ENCODE measurements at regions of chr17 and their contacts with region 1.

Region 1: DNA sequence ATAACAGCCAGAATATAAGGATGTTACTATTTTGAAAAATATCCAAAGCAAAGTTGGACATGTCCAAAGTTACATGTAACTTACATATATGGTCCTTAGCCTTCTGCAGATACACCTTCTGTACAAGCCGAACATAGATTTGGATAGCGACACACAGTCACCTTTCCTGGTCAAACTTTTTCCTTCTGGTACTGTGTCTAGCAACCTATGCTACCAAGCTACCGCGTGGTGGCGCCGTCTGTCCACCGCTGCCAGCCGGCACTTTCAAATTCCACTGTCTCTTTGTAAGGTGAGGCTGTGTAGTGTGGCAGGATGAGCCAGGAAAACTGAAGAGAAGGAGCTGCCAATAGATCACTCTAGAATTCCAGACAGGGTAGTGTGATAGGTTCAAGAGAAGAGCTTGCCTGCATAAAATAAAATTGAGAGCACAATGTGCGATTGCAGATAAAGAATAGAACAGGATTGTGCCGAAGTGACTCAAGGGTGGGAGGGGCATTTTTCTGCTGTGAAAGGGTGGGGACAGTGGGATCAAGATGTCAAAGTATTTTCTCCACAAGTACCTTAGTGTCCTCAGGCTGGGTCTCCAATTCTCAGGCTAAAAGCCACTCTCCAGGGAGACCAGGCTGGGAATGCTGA is 366.9 kb downstream of the SLC39A11 start:
- DNase-seq: peak; percentile 57
- H3K4me3 Mint-ChIP-seq: no peak overlapping the region
- H3K27ac Mint-ChIP-seq: peak overlapping the region; percentile 94
- H3K4me1 Mint-ChIP-seq: peaks cover 58% of the 10 kb centered on the region
- H3K27me3 Mint-ChIP-seq: no peaks in the 10 kb centered on the region

Region 2: DNA sequence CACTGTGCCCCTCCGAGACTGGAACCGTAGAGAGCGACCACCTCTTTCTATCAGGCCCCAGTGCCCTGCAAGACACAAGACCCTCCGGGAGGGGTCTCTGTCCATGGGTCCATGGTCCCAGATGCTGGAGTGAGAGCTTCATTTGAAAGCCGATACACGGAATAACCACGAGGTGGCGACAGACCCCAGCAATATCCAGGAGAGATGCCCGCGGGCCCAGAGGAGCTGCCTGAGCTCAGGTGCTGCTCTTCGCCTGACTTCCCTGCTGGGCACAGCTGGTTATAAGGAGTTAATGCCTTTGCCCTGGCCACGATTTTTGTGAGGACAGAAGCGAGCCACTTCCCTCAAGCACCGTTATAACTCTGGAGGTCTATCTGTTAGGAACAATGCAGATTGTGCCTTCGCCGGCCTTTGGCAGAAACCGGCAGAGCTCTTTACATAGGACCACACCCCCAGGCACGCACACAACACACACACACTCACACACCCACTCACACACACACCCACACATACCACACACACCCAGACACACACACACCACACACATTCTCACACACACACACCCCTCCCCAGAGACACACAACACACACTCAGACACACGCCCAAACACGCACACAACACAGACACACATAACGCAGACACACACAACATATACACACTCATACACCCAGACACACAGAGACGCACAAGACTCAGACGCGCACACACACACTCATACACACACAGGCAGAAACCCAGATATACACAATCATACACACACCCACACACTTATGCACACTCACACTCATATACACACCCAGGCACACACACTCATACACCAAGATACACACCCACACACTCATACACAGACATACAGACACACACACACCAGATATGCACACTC is 168.4 kb before region 1 on chr17:
- CTCF ChIA-PET with region 1: interaction called, 19 read pairs
- POLR2A ChIA-PET with region 1: interaction called, 3 read pairs
- DNase-seq: peak; percentile 79
- H3K4me3 Mint-ChIP-seq: no peak overlapping the region
- H3K27ac Mint-ChIP-seq: no peak overlapping the region
- H3K4me1 Mint-ChIP-seq: peaks cover 5% of the 10 kb centered on the region
- H3K27me3 Mint-ChIP-seq: no peaks in the 10 kb centered on the region

Region 3: DNA sequence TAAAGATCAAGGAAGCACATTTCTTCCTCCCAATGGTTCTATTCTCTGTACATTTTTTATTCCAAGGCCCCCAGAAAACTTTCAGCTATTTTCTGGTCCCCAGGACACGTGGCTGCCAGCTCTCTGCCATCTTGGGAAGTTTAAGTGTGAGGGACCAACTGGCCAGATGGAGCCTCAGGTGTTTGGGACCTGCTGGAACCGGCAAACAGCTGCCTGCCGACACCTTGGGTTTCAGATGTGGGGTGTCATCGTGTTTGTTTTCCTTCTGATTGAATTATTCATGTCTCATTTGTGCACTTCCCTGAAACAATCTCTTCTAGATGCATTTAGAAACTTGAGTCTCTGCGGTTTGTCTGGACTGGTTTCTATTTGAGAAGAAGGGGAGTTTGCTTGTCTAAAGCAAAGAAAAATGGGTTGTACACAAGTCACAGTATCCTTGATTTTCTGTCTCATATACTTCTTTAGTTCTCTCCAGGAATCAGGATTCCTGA is 19.6 kb before region 1 on chr17:
- CTCF ChIA-PET with region 1: interaction called, 20 read pairs
- POLR2A ChIA-PET with region 1: no interaction called
- DNase-seq: no peak
- H3K4me3 Mint-ChIP-seq: no peak overlapping the region
- H3K27ac Mint-ChIP-seq: peak overlapping the region; percentile 63
- H3K4me1 Mint-ChIP-seq: peaks cover 50% of the 10 kb centered on the region
- H3K27me3 Mint-ChIP-seq: no peaks in the 10 kb centered on the region

Region 4: GRCh38 chr17:73156166-73156840 is 430.8 kb after region 1 on chr17:
- CTCF ChIA-PET with region 1: interaction called, 35 read pairs
- POLR2A ChIA-PET with region 1: no interaction called
- DNase-seq: peak; percentile 65
- H3K4me3 Mint-ChIP-seq: no peak overlapping the region
- H3K27ac Mint-ChIP-seq: no peak overlapping the region
- H3K4me1 Mint-ChIP-seq: peaks cover 7% of the 10 kb centered on the region
- H3K27me3 Mint-ChIP-seq: peaks cover 19% of the 10 kb centered on the region

Region 5: DNA sequence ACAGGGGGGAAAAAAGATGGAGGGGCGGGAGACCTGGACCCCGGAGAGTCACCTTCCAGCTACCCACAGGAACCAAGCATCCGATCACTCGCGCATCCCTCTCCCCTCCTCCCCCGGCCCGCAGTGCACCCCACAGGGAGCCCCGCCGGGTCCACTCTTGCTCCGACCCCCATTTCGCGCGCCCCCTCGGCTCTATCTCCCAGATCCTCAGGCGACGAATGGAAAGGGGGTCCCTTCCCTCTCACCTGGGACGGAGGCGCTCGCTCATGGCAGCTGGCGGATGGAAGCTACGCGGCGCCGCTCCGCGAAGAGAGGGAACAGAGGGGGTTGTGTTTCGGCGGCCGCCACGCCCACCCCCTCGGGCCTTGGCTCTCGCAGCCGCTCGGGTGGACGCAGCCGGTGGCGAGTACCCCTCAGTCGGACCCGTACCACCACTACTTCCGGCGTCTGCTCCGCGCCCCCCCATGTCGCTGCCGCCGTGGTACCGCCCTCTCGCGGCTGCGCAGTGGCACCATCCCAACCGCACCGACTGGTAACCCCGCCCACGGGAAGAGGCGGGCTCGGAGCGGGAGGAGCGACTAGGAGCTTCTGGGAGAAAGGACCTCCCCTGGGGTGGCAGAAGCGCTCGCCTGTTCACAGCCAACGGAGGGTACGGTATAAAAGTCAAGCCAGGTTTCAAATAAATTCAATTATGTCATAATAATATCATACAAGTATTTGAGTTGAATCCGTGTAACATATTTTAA is 506.5 kb after region 1 on chr17:
- CTCF ChIA-PET with region 1: interaction called, 12 read pairs
- POLR2A ChIA-PET with region 1: no interaction called
- DNase-seq: peak; percentile 96
- H3K4me3 Mint-ChIP-seq: peak overlapping the region; percentile 95
- H3K27ac Mint-ChIP-seq: peak overlapping the region; percentile 96
- H3K4me1 Mint-ChIP-seq: peaks cover 67% of the 10 kb centered on the region
- H3K27me3 Mint-ChIP-seq: no peaks in the 10 kb centered on the region

Region 6: DNA sequence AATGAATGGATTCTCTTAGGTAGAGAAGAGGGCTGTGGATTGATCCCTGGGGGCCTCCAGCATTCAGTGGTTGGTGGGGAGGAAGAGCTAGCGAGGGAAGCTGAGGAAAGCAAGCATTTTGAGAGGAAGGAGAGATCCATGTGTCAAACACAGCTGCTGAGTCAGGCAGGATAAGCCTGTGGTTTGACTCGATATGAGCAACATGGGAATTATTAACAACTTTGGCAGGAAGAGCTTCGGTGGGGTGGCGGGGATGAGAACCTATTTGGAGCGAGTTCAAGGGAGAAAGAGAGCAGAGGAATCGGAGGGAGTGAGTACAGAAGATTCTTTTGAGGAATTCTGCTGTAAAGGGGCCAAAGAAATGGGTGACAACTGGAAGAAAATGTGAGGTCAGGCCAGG is 645.7 kb after region 1 on chr17:
- CTCF ChIA-PET with region 1: interaction called, 24 read pairs
- POLR2A ChIA-PET with region 1: no interaction called
- DNase-seq: no peak
- H3K4me3 Mint-ChIP-seq: no peak overlapping the region
- H3K27ac Mint-ChIP-seq: no peak overlapping the region
- H3K4me1 Mint-ChIP-seq: no peaks in the 10 kb centered on the region
- H3K27me3 Mint-ChIP-seq: peaks cover 2% of the 10 kb centered on the region

Measured in activated CD4-positive, alpha-beta T cell treated with anti-CD3 and anti-CD28 coated beads, Interleukin-2, amount 10 ng/mL, durations not matched to agents 7 days and 5 days (primary cell).